Activated naive CD4-positive, alpha-beta T cell treated with anti-CD3 and anti-CD28 coated beads for 36 hours (primary cell): ENCODE measurements at regions of chr17 and their contacts with region 1.

Region 1: GRCh38 chr17:74368092-74369081 is 1.1 kb downstream of the GPR142 start:
- DNase-seq: peak; percentile 81
- H3K4me3 Mint-ChIP-seq: no peak overlapping the region
- H3K27ac Mint-ChIP-seq: no peak overlapping the region
- H3K4me1 Mint-ChIP-seq: peaks cover 14% of the 10 kb centered on the region
- H3K27me3 Mint-ChIP-seq: no peaks in the 10 kb centered on the region

Region 2: GRCh38 chr17:74379495-74380085 is 11.2 kb after region 1 on chr17:
- CTCF ChIA-PET with region 1: interaction called, 37 read pairs
- intact Hi-C with region 1: no loop called
- DNase-seq: peak; percentile 96
- H3K4me3 Mint-ChIP-seq: no peak overlapping the region
- H3K27ac Mint-ChIP-seq: no peak overlapping the region
- H3K4me1 Mint-ChIP-seq: no peaks in the 10 kb centered on the region
- H3K27me3 Mint-ChIP-seq: no peaks in the 10 kb centered on the region

Region 3: DNA sequence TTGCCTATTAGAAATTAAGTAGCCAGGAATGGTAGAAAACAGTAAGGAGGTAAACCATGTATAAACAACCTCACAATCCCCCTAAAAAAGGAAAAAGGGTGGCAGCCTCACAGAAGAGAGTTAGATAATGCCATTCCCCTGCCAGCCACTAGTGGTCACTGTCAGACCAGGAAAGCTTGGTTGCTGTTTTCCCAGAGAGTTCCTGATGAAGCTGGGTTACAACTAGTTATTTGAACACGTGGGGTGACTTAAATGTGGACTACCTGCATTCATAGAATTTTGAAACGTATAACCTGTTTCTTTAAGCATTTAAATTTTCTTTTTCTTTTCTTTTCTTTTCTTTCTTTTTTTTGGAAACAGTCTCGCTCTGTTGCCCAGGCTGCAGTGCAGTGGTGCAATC is 69.3 kb after region 1 on chr17:
- CTCF ChIA-PET with region 1: interaction called, 18 read pairs
- intact Hi-C with region 1: no loop called
- DNase-seq: peak; percentile 26
- H3K4me3 Mint-ChIP-seq: no peak overlapping the region
- H3K27ac Mint-ChIP-seq: no peak overlapping the region
- H3K4me1 Mint-ChIP-seq: no peaks in the 10 kb centered on the region
- H3K27me3 Mint-ChIP-seq: peaks cover 22% of the 10 kb centered on the region

Region 4: DNA sequence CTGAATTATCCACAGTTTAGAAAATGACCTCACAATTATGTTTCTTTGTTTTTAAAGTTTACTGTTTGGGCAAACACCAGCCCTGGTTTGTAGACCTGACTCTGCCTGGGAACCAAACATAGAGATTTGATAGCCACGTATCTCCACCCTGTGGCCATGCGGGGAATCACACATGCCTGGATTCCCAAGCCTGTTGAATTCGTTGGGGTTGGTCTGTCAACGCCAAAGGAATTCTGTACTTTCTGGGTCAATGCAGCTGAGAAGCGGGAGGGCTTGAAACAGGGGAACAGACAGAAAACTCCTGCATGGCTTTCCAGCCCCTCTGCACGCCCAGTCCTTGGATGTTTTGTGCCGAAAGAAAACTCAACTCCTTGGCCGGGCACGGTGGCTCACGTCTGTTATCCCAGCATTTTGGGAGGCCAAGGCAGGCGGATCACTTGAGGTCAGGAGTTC is 125.0 kb after region 1 on chr17:
- CTCF ChIA-PET with region 1: interaction called, 9 read pairs
- intact Hi-C with region 1: loop called (anchors 1 kb)
- DNase-seq: peak; percentile 79
- H3K4me3 Mint-ChIP-seq: no peak overlapping the region
- H3K27ac Mint-ChIP-seq: no peak overlapping the region
- H3K4me1 Mint-ChIP-seq: no peaks in the 10 kb centered on the region
- H3K27me3 Mint-ChIP-seq: peaks cover 2% of the 10 kb centered on the region

Region 5: DNA sequence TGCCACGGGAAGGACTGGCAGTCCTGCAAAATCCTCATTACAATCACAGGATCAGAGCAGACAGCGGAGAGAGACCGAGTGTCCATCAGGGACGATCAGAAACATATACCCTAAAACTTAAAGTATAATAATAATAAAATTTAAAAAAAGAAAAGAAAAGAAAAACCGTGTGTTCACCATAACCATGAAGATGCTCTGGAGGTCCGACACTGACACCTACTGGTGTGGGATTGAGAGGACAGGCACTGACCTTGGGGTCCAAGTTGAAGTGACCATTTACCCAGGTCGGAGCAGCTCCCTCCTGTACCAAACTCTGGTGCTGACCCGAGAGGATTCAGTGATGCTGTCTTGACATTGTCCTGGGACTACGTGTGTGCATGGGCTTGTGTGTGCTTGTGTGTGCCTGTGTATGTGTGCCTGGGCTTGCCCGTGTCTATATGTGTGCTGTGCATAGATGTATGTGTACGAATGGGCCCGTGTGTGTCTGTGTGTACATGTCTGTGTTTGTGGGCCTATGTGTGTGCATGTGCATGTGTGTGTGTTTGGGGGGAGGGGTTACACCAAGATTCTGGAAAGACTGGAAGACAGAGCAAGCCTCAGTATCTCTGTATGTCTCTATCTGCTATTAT is 233.7 kb after region 1 on chr17:
- CTCF ChIA-PET with region 1: no interaction called
- intact Hi-C with region 1: loop called (anchors 2 kb)
- DNase-seq: peak; percentile 74
- H3K4me3 Mint-ChIP-seq: no peak overlapping the region
- H3K27ac Mint-ChIP-seq: no peak overlapping the region
- H3K4me1 Mint-ChIP-seq: peaks cover 20% of the 10 kb centered on the region
- H3K27me3 Mint-ChIP-seq: peaks cover 4% of the 10 kb centered on the region